HEK293T (cell line): ENCODE measurements at regions of chr10 and their contacts with region 1.

Region 1: DNA sequence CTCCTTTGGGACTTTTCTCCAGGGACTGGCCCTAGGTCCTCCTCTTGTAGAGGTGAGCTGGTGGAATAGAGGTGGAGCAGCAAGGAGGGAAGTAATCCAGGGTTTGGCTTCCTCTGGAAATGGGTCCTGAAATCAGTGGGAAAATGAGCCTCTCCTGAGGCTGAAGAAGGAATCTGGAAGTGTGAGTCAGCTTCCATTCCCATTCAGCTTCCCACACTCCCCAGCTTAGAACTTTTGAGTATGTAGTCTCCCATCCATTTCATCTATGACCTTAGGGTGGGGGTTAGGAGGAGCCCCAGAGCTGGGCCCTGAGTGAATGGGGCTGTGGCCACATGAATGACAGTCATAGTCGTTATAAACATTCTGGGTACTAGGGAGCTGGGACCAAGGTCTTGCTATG is 17.7 kb downstream of the LDB1 start:
- DNase-seq: no peak

Region 2: GRCh38 chr10:102055647-102056419 is 46.6 kb before region 1 on chr10 and contains the start of gene ARMH3:
- CTCF ChIA-PET with region 1: no interaction called
- POLR2A ChIA-PET with region 1: no interaction called
- DNase-seq: peak; percentile 98

Region 3: GRCh38 chr10:102085336-102085735 is 17.1 kb before region 1 on chr10:
- CTCF ChIA-PET with region 1: no interaction called
- POLR2A ChIA-PET with region 1: no interaction called
- DNase-seq: no peak

Region 4: DNA sequence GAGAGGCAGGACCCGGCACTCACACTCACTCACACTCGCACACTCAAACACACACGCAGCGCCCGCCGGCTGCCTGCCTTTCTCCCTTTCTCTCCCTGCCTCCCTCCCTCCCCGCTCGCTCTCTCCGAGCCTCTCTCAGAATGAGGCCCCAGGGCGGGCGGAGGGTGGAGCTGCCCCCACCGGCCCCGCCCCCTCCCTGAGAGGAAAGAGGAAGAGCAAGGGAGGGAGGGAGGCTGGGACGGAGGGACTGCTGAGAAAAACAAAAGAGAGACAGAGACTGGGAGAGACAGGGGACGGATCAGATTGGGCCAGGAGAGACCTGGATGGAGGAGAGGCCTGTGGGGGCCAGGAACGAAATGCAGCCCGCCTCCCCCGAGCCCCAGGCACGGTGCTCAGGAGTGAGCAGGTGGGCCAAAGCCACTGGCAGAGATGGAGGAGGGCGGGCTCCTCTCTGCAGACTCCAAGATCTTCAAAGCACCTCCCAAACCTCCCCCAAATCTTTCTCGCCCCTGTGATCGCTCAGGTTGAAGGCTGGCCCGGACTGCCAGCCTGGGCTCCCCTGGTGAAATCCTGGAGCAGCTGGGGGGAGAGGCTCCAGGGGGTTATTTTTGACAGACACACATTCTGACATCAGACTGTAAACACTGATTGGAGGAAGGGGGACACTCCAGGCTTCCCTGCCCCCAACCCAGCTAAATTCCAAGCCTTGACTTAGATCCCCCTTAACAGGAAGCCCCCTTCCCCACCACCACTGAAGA is 12.6 kb after region 1 on chr10:
- CTCF ChIA-PET with region 1: interaction called, 3 read pairs
- POLR2A ChIA-PET with region 1: interaction called, 15 read pairs
- DNase-seq: peak; percentile 84